AG04449 (cell line): ENCODE measurements at regions of chr17 and their contacts with region 1.

Region 1: DNA sequence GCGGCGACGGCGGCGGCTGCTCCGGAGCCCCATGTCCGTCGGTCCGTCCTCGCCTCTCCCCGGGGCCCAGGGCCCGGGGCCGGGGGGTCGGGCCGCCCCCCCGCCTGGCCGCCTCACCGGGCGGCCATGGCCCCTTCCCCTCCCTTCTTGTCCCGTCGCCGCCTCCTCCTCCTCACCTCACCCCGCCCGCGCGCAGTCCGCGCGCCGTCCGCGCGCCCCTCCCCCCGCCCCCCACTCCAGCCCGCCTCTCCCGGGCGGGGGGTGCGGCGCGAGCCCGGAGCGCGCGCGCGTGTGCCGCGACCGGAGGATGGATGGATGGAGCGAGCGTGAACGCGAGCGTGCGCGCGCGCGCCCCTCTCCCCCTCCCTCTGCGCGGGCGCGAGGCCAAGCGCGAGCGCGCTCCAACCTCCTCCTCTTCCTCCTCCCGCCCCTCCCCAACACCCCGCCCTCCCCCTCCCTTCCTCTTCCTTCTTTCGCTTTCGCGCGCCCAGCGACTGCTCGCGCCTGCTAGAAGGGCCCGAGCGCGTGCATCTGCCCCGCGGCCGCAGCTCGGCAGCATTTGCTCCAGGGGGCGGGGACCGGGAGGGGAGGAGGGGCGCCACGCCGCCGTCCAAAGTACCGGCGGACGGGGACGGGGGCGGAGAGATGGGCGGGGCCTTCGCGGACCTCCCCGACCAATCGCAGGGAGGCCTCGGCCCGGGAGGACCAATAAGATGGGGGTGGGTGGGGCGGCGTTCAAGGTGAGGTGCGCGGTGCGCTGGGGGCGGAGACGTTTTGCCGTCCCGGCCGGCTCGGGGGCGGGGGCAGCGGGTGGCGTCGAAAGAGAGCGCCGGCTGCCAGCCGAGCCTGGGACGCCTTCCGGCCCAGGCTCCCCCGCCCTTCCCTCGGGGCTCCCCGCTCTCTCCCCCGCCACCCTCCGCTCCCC is at the start of gene ATXN7L3:
- DNase-seq: peak; percentile 81
- H3K4me3 ChIP-seq: peak within 1 kb of the TSS; percentile 79
- CTCF ChIP-seq: no peak

Region 2: GRCh38 chr17:44218344-44219107 is 18.7 kb after region 1 on chr17:
- CTCF ChIA-PET with region 1: interaction called, 72 read pairs
- POLR2A ChIA-PET with region 1: interaction called, 10 read pairs
- DNase-seq: no peak
- H3K4me3 ChIP-seq: peak overlapping the region; percentile 82
- CTCF ChIP-seq: peak; percentile 70

Region 3: GRCh38 chr17:44350733-44351226 is 151.0 kb after region 1 on chr17:
- CTCF ChIA-PET with region 1: interaction called, 10 read pairs
- POLR2A ChIA-PET with region 1: no interaction called
- DNase-seq: no peak
- H3K4me3 ChIP-seq: no peak overlapping the region
- CTCF ChIP-seq: peak; percentile 87